ENCODE measurements at regions of chr10 and their contacts with region 1.

Region 1: GRCh38 chr10:5960070-5960972 is 17.0 kb downstream of the IL15RA start:
- DNase-seq: no peak
- H3K4me3 Mint-ChIP-seq: no peak overlapping the region
- H3K27ac Mint-ChIP-seq: no peak overlapping the region
- H3K4me1 Mint-ChIP-seq: peaks cover 6% of the 10 kb centered on the region
- H3K27me3 Mint-ChIP-seq: no peaks in the 10 kb centered on the region
- CTCF ChIP-seq: no peak

Region 2: DNA sequence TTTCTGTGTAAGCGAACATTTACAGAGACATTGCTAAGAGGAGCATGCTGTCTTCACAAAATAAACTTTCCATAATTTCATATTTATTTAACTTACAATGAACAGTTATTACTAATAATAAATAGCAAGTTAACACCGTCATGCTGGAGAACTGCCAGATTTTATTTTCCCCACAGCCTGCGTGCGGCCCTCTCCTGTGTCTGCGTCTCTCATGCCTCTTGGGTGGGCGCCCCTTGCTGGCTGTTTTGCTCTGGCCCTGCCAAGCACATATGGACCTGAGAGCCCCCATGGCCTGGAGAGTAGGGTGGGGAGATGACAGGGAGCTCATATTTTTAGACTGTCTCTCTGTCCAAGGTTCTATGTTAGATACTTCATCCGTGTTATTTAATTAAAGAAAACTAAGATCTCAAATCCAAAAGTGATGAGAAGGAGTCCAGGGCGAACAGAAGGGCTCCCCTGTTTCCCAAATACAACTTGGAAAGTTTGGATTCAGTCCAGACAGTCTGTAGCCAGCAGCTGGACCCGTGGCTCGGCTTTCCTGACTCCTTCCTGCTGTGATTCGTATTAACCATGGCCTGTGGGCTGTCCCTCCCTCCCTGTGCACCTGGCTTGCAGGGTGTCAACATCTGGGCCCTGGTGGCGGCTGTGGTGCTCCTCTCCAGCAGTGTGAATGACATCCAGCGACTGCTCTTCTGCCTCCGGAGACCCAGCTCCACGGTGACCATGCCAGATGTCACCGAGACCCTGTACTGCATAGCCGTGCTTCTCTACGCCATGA is 49.8 kb before region 1 on chr10:
- CTCF ChIA-PET with region 1: no interaction called
- POLR2A ChIA-PET with region 1: no interaction called
- intact Hi-C with region 1: no loop called
- DNase-seq: no peak
- H3K4me3 Mint-ChIP-seq: no peak overlapping the region
- H3K27ac Mint-ChIP-seq: no peak overlapping the region
- H3K4me1 Mint-ChIP-seq: peaks cover 5% of the 10 kb centered on the region
- H3K27me3 Mint-ChIP-seq: no peaks in the 10 kb centered on the region
- CTCF ChIP-seq: no peak

Region 3: GRCh38 chr10:5971315-5971832 is 11.1 kb after region 1 on chr10:
- CTCF ChIA-PET with region 1: interaction called, 8 read pairs
- POLR2A ChIA-PET with region 1: interaction called, 15 read pairs
- intact Hi-C with region 1: no loop called
- DNase-seq: peak; percentile 65
- H3K4me3 Mint-ChIP-seq: no peak overlapping the region
- H3K27ac Mint-ChIP-seq: peak overlapping the region; percentile 80
- H3K4me1 Mint-ChIP-seq: peaks cover 10% of the 10 kb centered on the region
- H3K27me3 Mint-ChIP-seq: no peaks in the 10 kb centered on the region
- CTCF ChIP-seq: no peak

Region 4: DNA sequence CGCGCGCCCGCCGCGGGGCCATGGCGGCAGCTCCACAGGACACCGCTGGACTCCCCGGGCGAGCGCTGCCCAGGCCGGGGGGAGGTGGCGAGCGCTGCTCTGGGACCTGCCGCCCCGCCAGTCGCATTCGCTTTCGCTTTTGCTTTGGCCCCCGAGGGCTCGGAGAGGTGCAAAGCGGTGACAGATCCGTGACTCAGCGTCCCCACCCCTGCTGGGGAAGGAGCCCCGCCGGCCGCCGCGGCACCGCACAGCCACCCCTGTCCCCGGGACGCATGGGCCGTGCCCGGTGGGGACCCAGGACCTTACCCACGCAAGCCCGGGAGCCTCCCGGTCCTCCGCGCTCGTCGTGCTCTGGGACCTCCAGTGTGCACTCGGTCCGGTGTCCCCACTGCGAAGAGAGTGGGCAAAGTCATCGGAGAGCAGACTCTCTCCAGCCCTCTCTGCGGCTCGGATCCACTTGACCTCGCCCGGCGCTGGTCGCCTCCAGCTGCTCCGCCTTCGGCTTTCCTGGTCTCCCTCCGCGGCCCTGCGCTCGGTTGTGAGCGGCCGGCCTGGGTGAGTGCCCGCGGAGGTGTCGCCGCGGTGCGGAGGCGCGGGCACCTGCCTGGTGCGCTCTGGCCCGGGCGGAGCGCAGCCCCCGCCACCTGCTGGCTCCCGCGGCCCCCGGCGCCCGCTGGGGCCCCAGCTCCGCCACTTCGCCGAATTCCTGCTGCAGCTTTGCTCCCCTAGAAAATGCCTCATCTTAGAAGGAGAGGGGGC is 17.3 kb after region 1 on chr10 and contains the start of gene IL15RA:
- CTCF ChIA-PET with region 1: interaction called, 8 read pairs
- POLR2A ChIA-PET with region 1: interaction called, 15 read pairs
- intact Hi-C with region 1: no loop called
- DNase-seq: peak; percentile 80
- H3K4me3 Mint-ChIP-seq: peak within 1 kb of the TSS; percentile 73
- H3K27ac Mint-ChIP-seq: peak within 1 kb of the TSS; percentile 70
- H3K4me1 Mint-ChIP-seq: no peaks in the 10 kb centered on the region
- H3K27me3 Mint-ChIP-seq: no peaks in the 10 kb centered on the region
- CTCF ChIP-seq: no peak
- total RNA-seq, gene IL15RA: 6.0 and 7.9 TPM in 2 replicates

Measured in MCF 10A (cell line).